ENCODE measurements at regions of chr1 and their contacts with region 1.

Region 1: DNA sequence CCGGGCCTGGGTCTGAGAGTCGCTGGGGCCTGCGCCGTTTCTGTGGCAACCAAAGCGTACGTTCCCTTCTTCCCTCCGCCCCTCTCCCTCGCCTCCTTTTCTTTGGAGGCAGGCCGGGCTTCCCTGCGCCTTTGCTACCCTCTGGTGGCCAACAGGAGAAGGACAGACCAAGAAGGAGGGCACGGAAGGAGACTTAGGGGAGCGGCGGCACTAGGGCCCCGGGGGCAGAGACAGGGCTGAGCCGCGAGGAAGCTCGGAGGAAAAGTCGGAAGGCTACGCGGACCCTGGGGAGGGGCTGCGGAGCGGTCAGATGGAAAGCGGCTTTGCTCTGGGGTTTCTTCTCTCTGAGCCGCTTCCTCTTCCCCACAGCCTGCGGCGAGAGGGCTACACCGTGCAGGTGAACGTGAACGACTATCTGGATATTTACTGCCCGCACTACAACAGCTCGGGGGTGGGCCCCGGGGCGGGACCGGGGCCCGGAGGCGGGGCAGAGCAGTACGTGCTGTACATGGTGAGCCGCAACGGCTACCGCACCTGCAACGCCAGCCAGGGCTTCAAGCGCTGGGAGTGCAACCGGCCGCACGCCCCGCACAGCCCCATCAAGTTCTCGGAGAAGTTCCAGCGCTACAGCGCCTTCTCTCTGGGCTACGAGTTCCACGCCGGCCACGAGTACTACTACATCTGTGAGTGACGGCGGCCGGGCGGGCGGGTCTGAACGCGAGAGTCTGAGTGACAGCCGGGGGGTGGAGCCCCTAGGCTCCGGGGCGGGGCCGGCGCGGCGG is 6.3 kb downstream of the EFNA3 start:
- DNase-seq: peak; percentile 96
- H3K4me3 ChIP-seq: peak overlapping the region; percentile 13 to 68 (median 48)
- H3K27ac ChIP-seq: peak overlapping the region; percentile 45
- H3K4me1 ChIP-seq: peaks cover 12% of the 10 kb centered on the region
- H3K27me3 ChIP-seq: peaks cover 26 to 36% of the 10 kb centered on the region in 2 experiments
- CTCF ChIP-seq: peak; percentile 79 to 90
- POLR2A ChIP-seq: peak; percentile 31

Region 2: DNA sequence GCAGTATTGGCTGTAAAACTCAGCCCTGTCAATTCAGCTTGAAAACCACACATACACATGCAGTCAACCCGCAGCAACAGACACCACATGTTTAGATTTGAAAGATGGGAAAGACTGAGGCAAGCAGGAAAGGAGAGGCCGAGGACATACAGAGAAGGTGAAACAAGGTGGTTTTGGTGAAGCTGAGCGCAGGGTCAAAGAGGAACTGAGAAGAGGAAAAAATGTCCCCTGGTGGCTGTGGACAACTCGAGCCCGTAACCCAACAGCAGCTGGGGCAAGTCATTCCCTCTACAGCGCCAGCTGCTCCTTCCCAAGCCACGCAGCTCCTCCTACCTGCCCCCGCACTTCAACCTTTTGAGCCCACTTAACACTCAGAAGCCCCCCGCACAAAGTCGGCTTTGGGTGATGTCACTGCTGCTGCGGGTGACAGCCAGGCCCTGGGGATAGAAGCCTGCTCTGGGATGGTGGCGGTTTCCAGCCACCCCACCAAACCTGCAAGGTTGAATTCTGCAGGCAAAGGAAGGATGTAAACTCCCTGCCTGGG is 277.8 kb before region 1 on chr1:
- CTCF ChIA-PET with region 1: no interaction called
- POLR2A ChIA-PET with region 1: no interaction called
- dilution Hi-C with region 1: no loop called
- intact Hi-C with region 1: no loop called
- DNase-seq: no peak
- H3K4me3 ChIP-seq: no peak overlapping the region
- H3K27ac ChIP-seq: no peak overlapping the region
- H3K4me1 ChIP-seq: peaks cover 9% of the 10 kb centered on the region
- H3K27me3 ChIP-seq: peaks cover 0 to 15% of the 10 kb centered on the region in 2 experiments
- CTCF ChIP-seq: no peak
- POLR2A ChIP-seq: no peak

Region 3: GRCh38 chr1:154955718-154956543 is 129.0 kb before region 1 on chr1 and contains the start of gene PBXIP1:
- CTCF ChIA-PET with region 1: interaction called, 15 read pairs
- POLR2A ChIA-PET with region 1: no interaction called
- dilution Hi-C with region 1: no loop called
- intact Hi-C with region 1: no loop called
- DNase-seq: peak; percentile 98
- H3K4me3 ChIP-seq: peak within 1 kb of the TSS; percentile 19 to 76 (median 57)
- H3K27ac ChIP-seq: peak within 1 kb of the TSS; percentile 69
- H3K4me1 ChIP-seq: peaks cover 26% of the 10 kb centered on the region
- H3K27me3 ChIP-seq: no peaks in the 10 kb centered on the region
- CTCF ChIP-seq: peak; percentile 12 to 33
- POLR2A ChIP-seq: no peak
- total RNA-seq, gene PBXIP1: 49.0 and 49.4 TPM in 2 replicates

Region 4: DNA sequence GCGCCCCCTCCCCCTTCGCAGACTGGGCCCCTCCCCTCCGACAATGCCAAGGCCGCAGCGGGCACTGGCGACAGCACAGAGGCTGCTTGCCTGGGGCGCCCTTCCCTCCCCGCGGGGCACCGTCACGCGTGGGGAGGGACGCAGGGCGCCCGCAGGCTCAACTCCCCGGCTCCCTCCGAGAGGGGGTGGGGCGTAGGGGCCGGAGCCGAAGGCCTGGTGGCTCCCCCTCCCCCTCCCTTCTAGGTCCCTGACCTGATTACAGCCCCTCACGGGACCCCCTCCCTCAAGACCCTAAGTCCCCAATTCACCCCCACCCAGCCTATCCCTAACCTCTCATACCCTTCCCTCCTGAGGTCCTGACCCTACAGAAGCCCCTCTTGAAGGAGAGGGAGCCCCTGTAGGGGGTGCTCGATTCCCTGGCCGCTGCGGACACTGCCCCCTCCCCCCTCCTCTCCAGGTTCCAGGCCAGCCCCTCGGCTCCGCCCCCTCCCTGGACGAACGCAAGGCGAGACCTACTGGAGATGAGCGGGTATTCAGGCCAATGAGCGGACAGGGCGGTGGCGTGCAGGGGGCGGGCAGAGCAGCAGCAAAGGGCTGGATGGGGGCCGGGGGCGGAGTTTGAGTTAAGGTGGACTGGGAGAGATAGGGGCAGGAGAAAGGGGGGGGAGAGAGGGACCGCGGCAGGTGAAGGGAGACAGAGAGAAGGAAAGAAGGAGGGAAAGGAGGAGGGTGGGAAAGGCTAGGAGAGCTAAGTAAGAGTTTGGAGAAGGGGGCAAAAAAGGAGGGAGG is 83.0 kb before region 1 on chr1:
- CTCF ChIA-PET with region 1: interaction called, 9 read pairs
- POLR2A ChIA-PET with region 1: no interaction called
- dilution Hi-C with region 1: no loop called
- intact Hi-C with region 1: loop called (anchors 1 kb)
- DNase-seq: peak; percentile 99
- H3K4me3 ChIP-seq: peak overlapping the region; percentile 57 to 94 (median 61)
- H3K27ac ChIP-seq: peak overlapping the region; percentile 26
- H3K4me1 ChIP-seq: peaks cover 25% of the 10 kb centered on the region
- H3K27me3 ChIP-seq: no peaks in the 10 kb centered on the region
- CTCF ChIP-seq: peak; percentile 12 to 63
- POLR2A ChIP-seq: no peak

Region 5: GRCh38 chr1:155044812-155045690 is 39.9 kb before region 1 on chr1:
- CTCF ChIA-PET with region 1: interaction called, 67 read pairs
- POLR2A ChIA-PET with region 1: interaction called, 7 read pairs
- dilution Hi-C with region 1: no loop called
- intact Hi-C with region 1: loop called (anchors 1 kb)
- DNase-seq: peak; percentile 79
- H3K4me3 ChIP-seq: no peak overlapping the region
- H3K27ac ChIP-seq: no peak overlapping the region
- H3K4me1 ChIP-seq: peaks cover 18% of the 10 kb centered on the region
- H3K27me3 ChIP-seq: no peaks in the 10 kb centered on the region
- CTCF ChIP-seq: peak; percentile 79 to 89
- POLR2A ChIP-seq: no peak

Region 6: GRCh38 chr1:155063550-155064110 is 21.3 kb before region 1 on chr1 and contains the start of gene EFNA4:
- CTCF ChIA-PET with region 1: interaction called, 49 read pairs
- POLR2A ChIA-PET with region 1: no interaction called
- dilution Hi-C with region 1: no loop called
- intact Hi-C with region 1: loop called (anchors 1 kb)
- DNase-seq: peak; percentile 89
- H3K4me3 ChIP-seq: peak within 1 kb of the TSS; percentile 66 to 98 (median 85)
- H3K27ac ChIP-seq: peak within 1 kb of the TSS; percentile 36
- H3K4me1 ChIP-seq: peaks cover 10% of the 10 kb centered on the region
- H3K27me3 ChIP-seq: no peaks in the 10 kb centered on the region
- CTCF ChIP-seq: no peak
- POLR2A ChIP-seq: peak; percentile 89
- total RNA-seq, gene EFNA4: 16.5 and 17.5 TPM in 2 replicates

Region 7: GRCh38 chr1:155127105-155127964 is 42.4 kb after region 1 on chr1 and contains the start of gene EFNA1:
- CTCF ChIA-PET with region 1: interaction called, 13 read pairs
- POLR2A ChIA-PET with region 1: no interaction called
- dilution Hi-C with region 1: no loop called
- intact Hi-C with region 1: no loop called
- DNase-seq: peak; percentile 93
- H3K4me3 ChIP-seq: peak within 1 kb of the TSS; percentile 51 to 95 (median 91)
- H3K27ac ChIP-seq: peak within 1 kb of the TSS; percentile 68
- H3K4me1 ChIP-seq: peaks cover 59% of the 10 kb centered on the region
- H3K27me3 ChIP-seq: no peaks in the 10 kb centered on the region
- CTCF ChIP-seq: no peak
- POLR2A ChIP-seq: peak; percentile 95
- total RNA-seq, gene EFNA1: 107 and 111 TPM in 2 replicates

Region 8: DNA sequence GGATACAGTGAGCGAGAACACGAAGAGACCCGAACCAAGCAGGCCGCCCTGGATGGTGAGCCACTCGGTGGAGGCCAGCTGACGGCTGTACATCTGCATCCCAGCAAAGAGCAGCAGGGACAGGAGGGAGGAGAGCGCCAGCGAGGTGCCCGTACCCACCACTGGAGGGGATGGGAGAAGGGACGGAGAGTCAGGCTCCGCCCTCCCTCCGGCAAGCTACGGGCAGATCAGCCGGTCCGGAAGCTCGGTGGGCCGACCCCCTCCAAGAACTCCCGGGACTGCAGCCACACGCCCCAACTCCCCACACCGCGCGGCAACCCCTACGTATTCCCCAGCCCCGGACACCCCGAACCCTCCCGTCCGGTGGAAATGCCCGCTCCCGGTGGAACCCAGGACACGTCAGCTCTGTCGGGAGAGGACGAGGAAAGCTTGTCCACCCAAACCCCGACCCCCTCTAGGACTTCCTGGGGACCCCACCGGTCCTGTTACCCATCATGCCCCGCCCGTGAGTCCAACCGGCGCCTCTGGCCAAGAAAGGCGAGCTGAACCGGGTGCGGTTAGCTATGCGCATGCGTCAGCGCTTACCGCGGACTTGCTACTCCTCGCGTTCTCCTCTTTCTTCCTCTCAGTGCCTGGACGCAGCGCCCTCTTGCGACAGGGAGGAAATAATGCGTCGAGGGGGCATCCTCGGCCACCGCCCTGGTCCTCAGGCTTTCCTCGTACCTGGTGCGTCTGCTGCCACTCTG is 88.0 kb after region 1 on chr1 and contains the start of gene KRTCAP2:
- CTCF ChIA-PET with region 1: interaction called, 673 read pairs
- POLR2A ChIA-PET with region 1: no interaction called
- dilution Hi-C with region 1: no loop called
- intact Hi-C with region 1: no loop called
- DNase-seq: peak; percentile 93
- H3K4me3 ChIP-seq: peak within 1 kb of the TSS; percentile 52 to 91 (median 63)
- H3K27ac ChIP-seq: peak within 1 kb of the TSS; percentile 76
- H3K4me1 ChIP-seq: peaks cover 11% of the 10 kb centered on the region
- H3K27me3 ChIP-seq: no peaks in the 10 kb centered on the region
- CTCF ChIP-seq: peak; percentile 95 to 98
- POLR2A ChIP-seq: peak; percentile 97
- total RNA-seq, gene KRTCAP2: 170 and 207 TPM in 2 replicates

Region 9: GRCh38 chr1:155352631-155353030 is 267.7 kb after region 1 on chr1:
- CTCF ChIA-PET with region 1: no interaction called
- POLR2A ChIA-PET with region 1: no interaction called
- dilution Hi-C with region 1: no loop called
- intact Hi-C with region 1: no loop called
- DNase-seq: no peak
- H3K4me3 ChIP-seq: no peak overlapping the region
- H3K27ac ChIP-seq: no peak overlapping the region
- H3K4me1 ChIP-seq: no peaks in the 10 kb centered on the region
- H3K27me3 ChIP-seq: no peaks in the 10 kb centered on the region
- CTCF ChIP-seq: no peak
- POLR2A ChIP-seq: no peak